Right ventricle myocardium inferior (tissue), 1 donor: ENCODE measurements at regions of chr20 and their contacts with region 1.

Region 1: DNA sequence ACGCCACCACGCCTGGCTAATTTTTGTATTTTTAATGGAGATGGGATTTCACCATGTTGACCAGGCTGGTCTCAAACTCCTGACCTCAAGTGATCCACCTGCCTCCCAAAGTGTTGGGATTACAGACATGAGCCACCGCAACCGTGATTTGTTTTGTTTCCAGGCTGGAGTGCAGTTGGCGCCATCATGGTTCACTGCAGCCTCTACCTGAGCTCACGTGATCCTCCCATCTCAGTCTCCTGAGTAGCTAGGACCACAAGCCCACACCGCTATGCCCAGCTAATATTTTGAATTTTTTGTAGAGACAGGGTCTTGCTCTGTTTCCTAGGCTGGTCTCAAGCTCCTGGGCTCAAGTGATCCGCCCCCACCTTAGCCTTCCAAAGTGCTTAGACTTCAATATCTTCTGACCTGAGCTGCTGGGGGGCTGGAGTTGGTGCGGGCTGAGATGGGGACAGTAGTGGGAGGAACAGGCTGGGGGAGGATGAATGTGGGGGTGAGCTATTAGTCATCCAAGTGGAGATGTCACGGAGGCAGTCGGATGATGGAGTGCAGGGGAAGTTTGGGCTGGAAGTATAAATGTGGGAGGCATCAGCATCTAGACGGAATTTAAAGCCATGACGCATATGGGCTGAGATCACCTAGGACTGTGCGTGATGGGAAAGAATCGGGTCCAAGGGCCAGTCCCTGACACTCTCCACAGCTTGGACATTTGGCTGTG is 23.1 kb upstream of the ZMYND8 start:
- DNase-seq: no peak
- ATAC-seq: no peak

Region 2: DNA sequence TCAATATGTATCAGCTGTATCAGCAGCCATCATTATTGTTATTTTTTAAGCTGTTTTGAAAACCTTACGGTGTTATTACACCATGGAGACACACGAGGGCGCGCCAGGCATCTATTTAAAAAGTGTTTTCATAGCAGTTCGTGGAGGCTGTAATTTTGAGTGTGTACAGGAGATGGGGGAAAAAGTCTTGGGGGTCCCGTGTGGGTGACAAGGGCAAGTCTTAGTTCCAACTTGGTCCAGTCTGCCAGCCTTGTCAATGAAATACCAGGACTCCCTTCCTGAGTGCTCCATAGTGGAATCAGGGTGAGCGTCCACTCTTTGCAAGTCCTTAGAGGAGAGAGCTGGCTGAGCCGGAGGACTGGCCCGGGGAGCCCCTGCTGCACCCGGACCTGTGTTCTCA is 626.9 kb before region 1 on chr20:
- intact Hi-C with region 1: loop called (anchors 5 kb)
- DNase-seq: peak; percentile 85
- ATAC-seq: no peak

Region 3: GRCh38 chr20:47099825-47100441 is 279.7 kb before region 1 on chr20:
- intact Hi-C with region 1: no loop called
- DNase-seq: no peak
- ATAC-seq: peak; percentile 77

Region 4: DNA sequence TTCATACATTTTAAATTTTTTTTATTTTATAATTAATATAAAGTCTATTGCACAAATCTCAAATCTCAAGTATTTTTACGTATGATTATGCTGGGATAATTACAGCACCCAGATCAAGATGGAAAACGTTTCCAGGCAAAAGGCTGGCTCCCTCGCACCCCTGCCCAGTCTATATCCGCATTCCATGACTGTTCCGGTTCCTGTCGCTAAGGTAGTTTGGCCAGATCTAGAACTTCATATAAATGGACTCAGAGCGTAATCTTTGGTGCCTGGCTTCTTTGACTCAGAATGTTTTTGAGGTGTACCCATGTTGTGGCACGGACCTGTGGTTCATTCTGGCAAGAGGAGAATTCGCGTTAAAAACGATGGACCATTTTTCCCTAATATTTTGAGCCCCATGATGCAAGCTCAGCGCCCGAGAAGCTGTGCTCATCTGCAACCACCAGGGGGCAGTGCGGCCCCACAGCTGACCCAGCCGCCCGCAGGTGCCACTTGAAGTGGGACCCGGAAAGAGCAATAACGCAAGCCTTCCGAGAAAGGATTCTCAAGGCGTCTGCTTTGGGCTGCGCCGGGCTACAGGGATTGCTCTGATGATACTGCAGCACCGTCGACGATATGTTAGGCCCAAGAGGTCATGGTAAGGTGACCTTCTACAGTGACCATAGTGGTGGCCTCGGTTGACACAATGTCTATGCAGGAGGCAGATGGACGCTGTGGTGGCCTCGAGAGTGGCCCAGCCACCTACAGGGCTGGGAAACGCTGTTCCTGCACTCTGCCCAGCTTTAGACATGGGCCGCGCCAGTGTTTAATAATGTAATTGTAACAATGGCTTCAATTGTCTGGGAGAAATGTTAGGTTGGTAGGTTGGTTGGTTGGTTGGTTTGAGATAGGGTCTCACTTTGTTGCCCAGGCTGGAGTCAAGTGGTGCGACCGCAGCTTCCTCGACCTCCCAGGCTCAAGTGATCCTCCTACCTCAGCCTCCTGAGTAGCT is 183.2 kb before region 1 on chr20:
- intact Hi-C with region 1: loop called (anchors 1 kb)
- DNase-seq: peak; percentile 89
- ATAC-seq: peak; percentile 76

Region 5: DNA sequence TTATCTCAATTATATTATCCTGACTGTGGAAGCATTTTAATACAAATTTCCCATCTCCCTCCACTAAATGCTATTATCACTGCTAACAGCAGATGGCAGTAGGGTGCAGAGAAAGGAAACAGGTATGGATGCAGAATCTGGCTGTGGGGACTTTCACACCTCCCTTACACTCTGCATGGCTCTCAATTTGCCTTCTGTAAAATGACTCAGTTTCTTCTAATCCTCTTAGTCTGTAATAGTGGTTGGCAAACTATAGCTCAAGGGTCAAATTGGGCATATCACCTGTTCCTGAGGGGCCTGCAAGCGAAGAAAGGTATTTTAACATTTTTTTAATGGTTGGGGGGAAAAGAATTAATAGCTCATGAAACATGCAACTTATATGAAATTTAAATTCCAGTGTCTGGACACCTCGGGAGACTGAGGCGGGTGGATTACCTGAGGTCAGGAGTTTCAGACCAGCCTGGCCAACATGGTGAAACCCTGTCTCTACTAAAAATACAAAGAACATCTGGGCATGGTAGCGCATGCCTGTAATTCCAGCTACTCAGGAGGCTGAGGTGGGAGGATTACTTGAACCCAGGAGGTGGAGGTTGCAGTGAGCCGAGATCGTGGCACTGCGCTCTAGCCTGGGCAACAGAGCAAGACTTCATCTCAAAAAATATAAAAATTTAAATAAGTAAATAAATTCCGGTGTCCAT is 106.5 kb before region 1 on chr20:
- intact Hi-C with region 1: loop called (anchors 1 kb)
- DNase-seq: no peak
- ATAC-seq: peak; percentile 71

Region 6: GRCh38 chr20:47296950-47297349 is 82.6 kb before region 1 on chr20:
- intact Hi-C with region 1: loop called (anchors 5 kb)
- DNase-seq: no peak
- ATAC-seq: peak; percentile 62

Region 7: DNA sequence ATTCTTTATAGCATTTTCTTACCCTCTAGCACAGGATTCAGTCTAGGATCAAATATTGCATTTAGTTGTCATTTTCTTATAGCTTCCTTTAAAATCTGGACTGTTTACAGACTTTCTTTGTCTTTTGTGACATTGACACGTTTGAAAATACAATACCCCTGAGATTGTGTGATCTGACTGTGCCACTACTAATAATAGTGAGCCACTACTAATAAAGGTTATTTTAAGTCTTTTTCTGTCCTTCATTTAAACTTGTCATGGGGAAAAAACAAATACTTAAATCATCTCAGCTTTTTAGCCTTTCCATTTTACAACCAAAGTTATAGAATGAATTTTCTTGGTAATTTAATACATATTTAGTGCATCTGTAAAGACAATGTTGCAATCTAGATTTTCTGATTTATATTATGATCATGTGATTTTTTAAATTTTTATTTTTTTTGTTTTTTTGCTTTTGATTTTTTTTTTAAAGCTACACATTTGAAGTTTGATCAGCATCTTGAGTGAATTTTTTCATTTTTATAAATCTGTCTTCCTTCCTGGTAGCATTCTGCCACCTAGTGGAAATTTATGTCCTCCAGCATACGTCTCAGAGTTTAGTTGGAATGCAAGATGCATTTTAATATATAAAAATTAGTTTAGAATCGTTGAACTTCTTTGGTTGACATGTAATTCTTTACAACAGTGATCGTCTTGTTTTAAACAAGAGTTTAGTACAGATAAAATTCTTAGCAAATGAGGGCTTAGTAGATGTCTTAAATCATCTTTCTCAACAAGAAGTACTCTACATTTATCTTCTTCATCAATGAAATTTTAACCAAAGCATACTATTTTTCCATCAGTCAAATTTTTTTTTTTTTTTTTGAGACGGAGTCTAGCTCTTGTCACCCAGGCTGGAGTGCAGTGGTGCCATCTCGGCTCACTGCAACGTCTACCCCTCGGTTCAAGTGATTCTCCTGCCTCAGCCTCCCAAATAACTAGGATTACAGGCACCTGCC is 241.5 kb after region 1 on chr20:
- intact Hi-C with region 1: loop called (anchors 5 kb)
- DNase-seq: no peak
- ATAC-seq: no peak